ENCODE measurements at regions of chr3 and their contacts with region 1.

Region 1: DNA sequence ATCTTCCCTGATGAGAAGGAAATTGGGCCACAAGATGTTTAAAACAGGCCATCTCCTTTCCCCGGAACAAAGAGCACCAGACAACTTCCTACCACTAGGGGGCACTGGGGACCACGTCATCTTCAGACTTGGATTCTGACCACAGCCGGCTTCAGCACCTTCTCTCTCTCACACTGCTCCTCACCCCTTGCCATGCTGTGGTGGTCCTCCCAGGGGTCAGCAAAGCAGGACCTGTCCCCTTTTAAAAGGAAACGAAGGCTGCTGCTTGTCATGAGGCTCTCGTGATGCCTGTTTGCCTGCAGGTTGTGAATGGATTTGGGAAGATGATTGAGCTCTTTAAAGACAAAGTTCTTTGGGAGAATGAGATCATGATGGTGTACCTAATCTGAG is 16.2 kb downstream of the RFT1 start:
- DNase-seq: peak; percentile 76
- H3K4me3 ChIP-seq: no peak overlapping the region
- H3K27ac ChIP-seq: peak overlapping the region; percentile 50
- H3K4me1 ChIP-seq: peaks cover 41% of the 10 kb centered on the region
- H3K27me3 ChIP-seq: no peaks in the 10 kb centered on the region
- CTCF ChIP-seq: peak; percentile 85 to 92

Region 2: DNA sequence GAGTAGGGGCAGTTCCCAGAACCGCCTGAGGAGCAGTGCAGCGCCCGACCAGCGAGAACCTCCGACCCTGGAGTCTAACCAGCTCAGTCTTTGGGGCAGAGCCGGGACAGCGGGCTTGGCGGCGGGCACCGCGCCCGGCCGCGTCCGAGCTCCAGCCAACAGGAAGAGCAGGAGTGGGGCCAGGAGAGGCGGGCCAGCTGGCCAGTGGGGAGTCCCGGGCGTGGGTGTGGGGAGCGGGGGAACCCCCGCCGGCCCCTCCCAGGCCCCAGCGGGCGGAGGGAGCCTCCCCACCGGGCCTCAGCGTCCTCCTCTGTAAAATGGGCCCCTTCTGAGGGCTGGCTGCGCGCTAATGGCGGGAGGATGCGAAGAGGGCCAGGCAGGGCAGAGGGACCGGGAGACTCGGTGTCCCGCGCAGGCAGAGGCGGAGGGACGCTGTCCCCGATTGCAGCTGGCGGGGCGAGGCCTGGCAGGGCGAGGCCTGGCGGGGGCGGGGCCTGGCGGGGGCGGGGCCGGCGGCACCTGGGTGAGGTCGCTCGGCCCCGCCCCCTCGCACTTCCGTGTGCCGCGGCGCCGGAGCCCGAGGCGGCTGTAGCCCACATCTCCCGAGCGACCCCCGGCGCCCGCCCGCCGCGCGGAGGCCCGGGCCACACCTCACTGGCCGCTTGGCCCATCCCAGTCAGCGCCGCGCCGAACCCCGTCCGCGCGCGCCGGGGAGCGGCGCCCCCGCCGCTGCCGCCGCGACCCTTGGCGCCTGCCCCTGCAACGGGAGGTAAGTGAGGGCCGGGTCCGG is 46.8 kb after region 1 on chr3 and contains the start of gene PRKCD:
- CTCF ChIA-PET with region 1: interaction called, 5 read pairs
- dilution Hi-C with region 1: no loop called
- in situ Hi-C with region 1: no loop called
- intact Hi-C with region 1: loop called (anchors 5 kb)
- DNase-seq: peak; percentile 86
- H3K4me3 ChIP-seq: peak within 1 kb of the TSS; percentile 75 to 95 (median 86)
- H3K27ac ChIP-seq: peak within 1 kb of the TSS; percentile 52
- H3K4me1 ChIP-seq: peaks cover 45% of the 10 kb centered on the region
- H3K27me3 ChIP-seq: no peaks in the 10 kb centered on the region
- CTCF ChIP-seq: peak; percentile 17 to 43
- total RNA-seq, gene PRKCD: 6.2 to 37.2 TPM

Region 3: DNA sequence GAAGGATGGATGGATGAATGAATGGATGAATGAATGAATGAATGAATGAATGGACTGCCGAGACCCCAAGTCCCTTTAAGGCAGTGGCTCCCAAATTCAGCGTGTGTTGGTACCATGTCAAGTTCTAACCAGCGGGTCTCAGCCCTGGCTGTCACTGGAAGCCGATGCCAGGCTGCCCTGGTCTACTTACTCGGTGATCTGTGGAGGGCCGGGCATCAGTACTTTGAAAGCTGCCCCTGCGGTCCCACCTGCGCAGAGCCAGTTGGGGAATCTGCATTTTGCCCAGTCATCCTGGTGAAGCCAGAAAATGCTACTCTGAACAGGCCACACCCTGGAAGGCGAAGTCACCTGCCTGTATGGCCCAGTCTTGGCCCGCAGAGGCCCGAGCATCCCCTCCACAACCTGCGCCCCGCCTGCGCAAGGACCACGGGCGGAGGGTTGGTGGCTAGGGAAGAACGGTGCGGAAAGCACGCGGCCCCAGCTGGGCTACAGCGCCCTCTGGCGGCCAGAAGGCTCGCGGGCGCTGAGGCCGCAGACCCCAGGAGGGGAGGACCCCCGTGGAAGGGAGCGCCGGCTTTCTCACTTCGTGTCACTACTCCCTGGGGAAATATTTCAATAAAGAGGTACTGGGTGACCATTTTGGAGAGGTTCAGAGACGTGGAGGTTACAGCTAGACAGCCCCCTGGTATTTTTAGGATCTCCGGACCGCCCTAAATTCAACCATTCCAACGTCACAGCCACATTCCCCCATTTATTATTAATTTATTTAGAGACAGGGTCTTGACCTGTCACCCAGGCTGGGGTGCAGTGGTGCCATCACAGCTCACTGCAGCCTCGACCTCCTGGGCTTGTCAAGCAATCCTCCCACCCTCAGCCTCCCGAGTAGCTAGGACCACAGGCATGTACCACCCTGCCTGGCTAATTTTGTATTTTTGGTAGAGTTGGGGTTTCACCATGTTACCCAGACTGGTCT is 81.9 kb after region 1 on chr3:
- CTCF ChIA-PET with region 1: interaction called, 4 read pairs
- dilution Hi-C with region 1: loop called (anchors 5 kb)
- in situ Hi-C with region 1: loop called in 1 of 2 experiments (anchors 5 kb)
- intact Hi-C with region 1: loop called (anchors 1 kb)
- DNase-seq: peak; percentile 16
- H3K4me3 ChIP-seq: no peak overlapping the region
- H3K27ac ChIP-seq: no peak overlapping the region
- H3K4me1 ChIP-seq: peaks cover 11% of the 10 kb centered on the region
- H3K27me3 ChIP-seq: no peaks in the 10 kb centered on the region
- CTCF ChIP-seq: peak; percentile 70 to 99

Measured in mammary epithelial cell (primary cell).